ENCODE measurements at regions of chr2 and their contacts with region 1.

Region 1: DNA sequence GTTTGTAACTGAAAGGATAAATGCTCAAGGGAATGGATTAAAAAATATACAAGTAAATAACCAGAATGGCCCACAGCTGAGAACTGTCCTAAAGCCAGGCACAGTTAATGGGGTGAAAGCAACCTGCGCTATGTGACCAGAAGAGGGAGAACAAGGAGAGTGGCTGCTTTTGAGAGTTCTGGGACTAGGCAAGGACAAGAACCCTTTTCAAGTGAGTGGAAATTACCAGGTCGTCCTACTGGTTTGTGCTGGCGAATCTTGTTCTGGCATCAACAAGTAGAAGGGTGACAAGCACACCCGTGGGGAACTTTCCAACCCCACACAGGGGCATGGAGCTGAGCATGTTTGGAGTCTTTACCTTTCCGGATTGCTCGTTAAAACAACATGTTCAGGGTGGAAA is 82.8 kb downstream of the TMEM17 start:
- DNase-seq: peak; percentile 71
- ATAC-seq: peak; percentile 93
- H3K4me3 ChIP-seq: no peak overlapping the region
- H3K27ac ChIP-seq: no peak overlapping the region
- H3K4me1 ChIP-seq: peaks cover 18% of the 10 kb centered on the region
- H3K27me3 ChIP-seq: no peaks in the 10 kb centered on the region
- CTCF ChIP-seq: peak; percentile 72
- EP300 ChIP-seq: 0 out of 4 replicates have a peak, but pooled peaks of 1 of the 2 experiments have one; percentile 4
- POLR2A ChIP-seq: no peak
- RAD21 ChIP-seq: peak; percentile 46

Region 2: GRCh38 chr2:62774555-62775366 is 351.5 kb after region 1 on chr2:
- CTCF ChIA-PET with region 1: interaction called, 7 read pairs
- POLR2A ChIA-PET with region 1: no interaction called
- in situ Hi-C with region 1: no loop called
- intact Hi-C with region 1: loop called (anchors 1 kb)
- DNase-seq: peak; percentile 78
- ATAC-seq: peak; percentile 85
- H3K4me3 ChIP-seq: no peak overlapping the region
- H3K27ac ChIP-seq: peak overlapping the region; percentile 41
- H3K4me1 ChIP-seq: peaks cover 23% of the 10 kb centered on the region
- H3K27me3 ChIP-seq: no peaks in the 10 kb centered on the region
- CTCF ChIP-seq: peak; percentile 73
- EP300 ChIP-seq: peak in 1 of 2 experiments; percentile 52; a peak in 2 of 4 replicates
- POLR2A ChIP-seq: no peak
- RAD21 ChIP-seq: peak; percentile 75